Mammary epithelial cell (primary cell): ENCODE measurements at regions of chrX and their contacts with region 1.

Region 1: DNA sequence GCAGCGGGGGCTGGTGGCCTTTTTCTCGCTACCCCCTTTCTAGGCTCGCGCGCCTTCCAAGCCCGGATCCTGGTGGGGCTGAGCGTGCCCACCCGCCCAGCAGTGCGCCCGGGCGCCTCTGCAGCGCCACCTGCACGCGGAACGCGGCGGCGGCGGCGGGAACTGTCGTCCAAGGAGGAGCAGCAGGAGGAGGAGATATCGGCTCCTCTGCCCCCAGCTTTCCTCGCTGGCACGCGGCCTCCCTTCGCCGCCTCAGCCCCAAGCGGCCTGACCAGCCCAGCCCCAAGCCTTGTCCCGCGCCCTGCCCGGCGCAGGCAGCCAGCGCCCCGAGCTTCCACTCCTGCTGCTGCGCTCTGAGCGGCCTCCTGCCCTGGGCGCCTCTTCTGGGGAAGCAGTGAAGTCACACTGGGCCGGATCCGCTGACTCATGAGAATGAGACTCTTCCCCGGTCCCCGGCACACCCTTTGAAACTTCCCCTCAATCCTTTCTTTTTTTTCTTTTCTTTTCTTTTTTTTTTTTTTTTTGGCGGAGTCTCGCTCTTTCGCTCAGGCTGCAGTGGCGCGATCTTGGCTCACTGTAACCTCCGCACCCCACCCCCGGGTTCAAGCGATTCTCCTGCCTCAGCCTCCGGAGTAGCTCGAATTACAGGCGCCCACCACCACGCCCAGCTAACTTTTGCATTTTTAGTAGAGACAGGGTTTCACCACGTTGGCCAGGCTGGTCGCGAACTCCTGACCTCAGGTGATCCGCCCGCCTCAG is 10.6 kb upstream of the ELF4 start:
- DNase-seq: peak; percentile 82
- H3K4me3 ChIP-seq: peak overlapping the region in 2 of 3 experiments; percentile 35 to 44
- H3K27ac ChIP-seq: peak overlapping the region; percentile 46
- H3K4me1 ChIP-seq: peaks cover 26% of the 10 kb centered on the region
- H3K27me3 ChIP-seq: no peaks in the 10 kb centered on the region
- CTCF ChIP-seq: peak; percentile 33 to 67

Region 2: GRCh38 chrX:129462707-129463106 is 658.2 kb before region 1 on chrX:
- CTCF ChIA-PET with region 1: no interaction called
- dilution Hi-C with region 1: no loop called
- in situ Hi-C with region 1: no loop called
- intact Hi-C with region 1: no loop called
- DNase-seq: no peak
- H3K4me3 ChIP-seq: no peak overlapping the region
- H3K27ac ChIP-seq: no peak overlapping the region
- H3K4me1 ChIP-seq: no peaks in the 10 kb centered on the region
- H3K27me3 ChIP-seq: no peaks in the 10 kb centered on the region
- CTCF ChIP-seq: peak in 1 of 2 donors; percentile 21

Region 3: DNA sequence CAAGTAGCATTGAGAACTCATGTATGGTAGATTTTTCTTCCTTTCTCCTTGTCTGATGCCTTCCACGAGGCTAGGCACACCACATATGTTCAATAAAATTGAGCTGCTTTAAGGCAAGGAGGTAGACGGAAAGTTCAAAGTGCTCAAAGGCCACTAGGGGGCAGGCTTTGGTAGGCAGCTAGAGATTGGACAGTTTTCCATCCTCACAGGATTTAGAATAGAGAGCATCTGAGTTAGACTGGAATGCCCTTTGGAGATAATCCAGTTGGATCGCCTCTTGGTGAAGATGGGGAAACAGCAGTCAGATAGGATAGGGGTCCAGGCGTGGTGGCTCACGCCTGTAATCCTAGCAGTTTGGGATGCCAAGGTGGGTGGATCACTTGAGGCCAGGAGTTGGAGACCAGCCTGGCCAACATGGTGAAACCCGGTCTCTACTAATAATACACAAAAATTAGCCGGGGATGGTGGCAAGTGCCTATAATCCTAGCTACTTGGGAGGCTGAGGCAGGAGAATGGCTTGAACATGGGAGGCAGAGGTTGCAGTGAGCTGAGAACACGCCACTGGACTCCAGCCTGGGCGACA is 41.0 kb before region 1 on chrX:
- CTCF ChIA-PET with region 1: no interaction called
- dilution Hi-C with region 1: no loop called
- in situ Hi-C with region 1: no loop called
- intact Hi-C with region 1: loop called (anchors 1 kb)
- DNase-seq: peak; percentile 36
- H3K4me3 ChIP-seq: no peak overlapping the region
- H3K27ac ChIP-seq: no peak overlapping the region
- H3K4me1 ChIP-seq: no peaks in the 10 kb centered on the region
- H3K27me3 ChIP-seq: no peaks in the 10 kb centered on the region
- CTCF ChIP-seq: peak; percentile 65 to 72

Region 4: GRCh38 chrX:130260316-130260715 is 139.4 kb after region 1 on chrX:
- CTCF ChIA-PET with region 1: no interaction called
- dilution Hi-C with region 1: no loop called
- in situ Hi-C with region 1: no loop called
- intact Hi-C with region 1: no loop called
- DNase-seq: no peak
- H3K4me3 ChIP-seq: no peak overlapping the region
- H3K27ac ChIP-seq: no peak overlapping the region
- H3K4me1 ChIP-seq: no peaks in the 10 kb centered on the region
- H3K27me3 ChIP-seq: no peaks in the 10 kb centered on the region
- CTCF ChIP-seq: no peak